HepG2 (cell line): ENCODE measurements at regions of chr13 and their contacts with region 1.

Region 1: DNA sequence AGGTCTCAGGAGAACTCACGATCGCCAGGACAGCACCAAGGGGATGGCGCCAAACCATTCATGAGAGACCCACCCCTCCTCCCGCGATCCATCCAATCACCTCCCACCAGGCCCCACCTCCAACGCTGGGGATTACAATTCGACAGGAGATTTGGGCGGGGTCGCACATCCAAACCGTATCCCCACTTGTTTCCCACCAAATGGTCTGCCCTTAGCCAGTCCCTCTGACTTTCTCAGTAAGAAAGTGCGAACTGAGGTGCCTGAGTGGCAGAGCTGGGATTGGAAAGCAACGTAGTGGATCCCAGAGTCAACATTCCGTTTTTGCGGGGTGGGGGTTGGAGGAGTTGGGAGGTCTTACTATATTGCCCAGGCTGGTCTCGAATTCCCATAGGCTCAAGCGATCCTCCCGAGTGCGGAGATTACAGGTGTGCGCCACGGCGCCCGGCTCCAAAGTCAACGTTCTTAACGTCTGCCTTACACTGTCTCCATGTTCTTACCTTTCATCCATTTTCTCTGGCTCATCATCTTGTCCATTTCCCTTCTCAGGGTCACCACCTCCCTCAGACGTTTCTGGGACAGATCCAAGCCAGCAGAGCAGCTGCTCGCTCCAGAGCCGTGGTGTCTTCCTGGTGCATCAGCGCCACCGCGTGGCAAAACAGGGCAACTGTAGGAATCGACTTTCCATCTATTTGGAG is 102.7 kb upstream of the ABCC4 start:
- DNase-seq: peak; percentile 51
- ATAC-seq: peak; percentile 94
- H3K4me3 ChIP-seq: peak overlapping the region in 1 of 3 experiments; percentile 39; a peak in 1 of 6 replicates
- H3K27ac ChIP-seq: no peak overlapping the region
- H3K4me1 ChIP-seq: peaks cover 13% of the 10 kb centered on the region
- H3K27me3 ChIP-seq: no peaks in the 10 kb centered on the region; a peak in 2 of 5 replicates
- CTCF ChIP-seq: peak; percentile 95
- EP300 ChIP-seq: no peak
- POLR2A ChIP-seq: no peak
- RAD21 ChIP-seq: peak; percentile 94

Region 2: DNA sequence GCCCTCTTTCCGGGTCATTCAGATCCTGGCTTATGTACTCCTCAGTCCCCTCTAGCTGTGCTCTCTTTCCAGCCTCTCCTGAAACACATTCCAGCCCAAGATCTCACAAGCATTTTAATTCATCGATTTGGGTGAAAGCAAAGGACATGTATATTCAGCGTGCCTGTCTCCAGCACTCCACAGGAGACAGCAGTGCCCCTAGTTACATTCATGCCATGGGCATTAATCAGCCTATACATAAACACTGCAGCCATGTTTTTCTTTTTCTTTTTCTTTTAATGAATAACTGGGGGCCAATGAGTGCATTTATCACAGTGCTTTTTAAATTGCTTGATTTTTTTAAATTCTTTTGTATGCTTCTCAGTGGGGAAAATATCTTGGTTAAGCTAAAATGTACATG is 1123.6 kb before region 1 on chr13:
- CTCF ChIA-PET with region 1: no interaction called
- POLR2A ChIA-PET with region 1: no interaction called
- in situ Hi-C with region 1: no loop called
- intact Hi-C with region 1: no loop called
- DNase-seq: no peak
- ATAC-seq: no peak; the same call in 2 of the 3 replicates
- H3K4me3 ChIP-seq: no peak overlapping the region
- H3K27ac ChIP-seq: no peak overlapping the region
- H3K4me1 ChIP-seq: no peaks in the 10 kb centered on the region
- H3K27me3 ChIP-seq: no peaks in the 10 kb centered on the region
- CTCF ChIP-seq: no peak
- EP300 ChIP-seq: no peak
- POLR2A ChIP-seq: no peak
- RAD21 ChIP-seq: no peak

Region 3: DNA sequence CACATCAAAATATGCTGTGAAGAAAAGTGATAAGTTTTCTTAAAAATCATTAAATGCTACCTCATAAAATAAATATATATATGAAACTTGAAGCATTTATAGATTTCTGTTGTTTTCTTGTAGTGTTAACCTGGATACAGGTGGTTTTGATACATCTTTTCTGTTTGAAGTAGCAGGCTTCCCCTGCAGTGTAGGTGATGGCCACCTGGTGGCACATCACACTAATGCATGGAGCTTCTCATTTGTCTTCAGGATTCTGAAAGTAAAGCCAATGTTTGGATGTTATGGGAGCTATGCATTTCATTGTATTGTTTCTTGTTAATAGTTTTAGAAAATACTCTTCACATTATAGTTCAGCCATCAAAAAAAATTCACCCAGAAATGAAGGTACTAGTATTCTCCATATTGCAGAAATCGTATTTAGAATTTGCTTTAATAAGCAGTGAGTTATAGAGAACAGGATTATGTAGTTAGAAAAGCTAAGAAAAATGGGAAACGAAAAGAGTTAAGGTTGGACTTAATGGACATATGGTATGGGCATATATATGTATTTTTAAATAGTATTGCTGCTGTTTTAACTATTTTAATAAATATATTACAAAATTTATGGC is 783.6 kb before region 1 on chr13:
- CTCF ChIA-PET with region 1: no interaction called
- POLR2A ChIA-PET with region 1: no interaction called
- in situ Hi-C with region 1: no loop called
- intact Hi-C with region 1: loop called (anchors 2 kb)
- DNase-seq: peak; percentile 39
- ATAC-seq: peak; percentile 90
- H3K4me3 ChIP-seq: no peak overlapping the region
- H3K27ac ChIP-seq: no peak overlapping the region
- H3K4me1 ChIP-seq: no peaks in the 10 kb centered on the region
- H3K27me3 ChIP-seq: peaks cover 0 to 4% of the 10 kb centered on the region in 2 experiments; a peak in 1 of 5 replicates
- CTCF ChIP-seq: peak; percentile 66
- EP300 ChIP-seq: no peak
- POLR2A ChIP-seq: no peak
- RAD21 ChIP-seq: peak; percentile 41; the same call in 1 of the 2 replicates

Region 4: DNA sequence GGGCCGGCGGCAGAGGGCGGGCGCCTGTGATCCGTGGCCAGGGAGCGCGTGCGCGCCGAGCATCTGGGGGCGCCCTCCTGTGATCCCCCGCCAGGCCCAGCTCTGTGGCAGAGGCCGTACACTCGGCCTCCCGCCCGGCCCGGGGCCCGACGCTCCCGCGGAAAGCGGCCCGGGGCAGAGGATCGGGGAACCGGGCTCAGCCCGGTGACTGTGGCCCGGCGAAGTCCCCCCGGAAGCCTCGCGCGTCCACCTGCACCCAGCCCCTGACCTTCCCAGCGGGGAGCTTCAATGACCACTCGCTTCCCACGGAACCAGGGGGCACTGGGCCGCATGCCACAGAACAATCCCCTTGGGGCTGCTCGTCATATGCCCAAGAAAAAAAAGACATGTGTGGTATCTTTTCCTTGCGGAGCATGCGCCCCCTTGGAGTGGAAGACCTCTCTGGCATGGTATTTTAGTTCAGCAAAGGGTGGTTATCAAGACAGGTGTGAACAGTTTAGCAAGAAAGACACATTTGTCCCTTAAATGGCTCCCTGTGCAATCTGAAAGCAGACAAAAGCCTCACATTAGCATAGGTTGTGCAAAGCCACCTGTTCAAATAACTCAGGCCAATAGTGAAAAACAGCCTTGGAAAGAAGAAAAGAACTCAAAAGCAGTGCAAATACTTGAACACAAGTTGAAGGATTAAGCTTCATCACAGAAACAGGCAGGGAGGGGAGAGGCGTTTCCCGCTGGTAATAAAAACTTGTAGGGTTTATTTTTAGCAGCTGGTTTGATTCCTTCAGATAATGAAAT is 400.8 kb before region 1 on chr13:
- CTCF ChIA-PET with region 1: no interaction called
- POLR2A ChIA-PET with region 1: no interaction called
- in situ Hi-C with region 1: loop called (anchors 25 kb)
- intact Hi-C with region 1: no loop called
- DNase-seq: no peak
- ATAC-seq: no peak; the same call in 1 of the 3 replicates
- H3K4me3 ChIP-seq: no peak overlapping the region
- H3K27ac ChIP-seq: no peak overlapping the region
- H3K4me1 ChIP-seq: peaks cover 19% of the 10 kb centered on the region
- H3K27me3 ChIP-seq: peaks cover 2 to 4% of the 10 kb centered on the region in 2 experiments; a peak in 1 of 5 replicates
- CTCF ChIP-seq: no peak
- EP300 ChIP-seq: no peak
- POLR2A ChIP-seq: no peak
- RAD21 ChIP-seq: no peak

Region 5: DNA sequence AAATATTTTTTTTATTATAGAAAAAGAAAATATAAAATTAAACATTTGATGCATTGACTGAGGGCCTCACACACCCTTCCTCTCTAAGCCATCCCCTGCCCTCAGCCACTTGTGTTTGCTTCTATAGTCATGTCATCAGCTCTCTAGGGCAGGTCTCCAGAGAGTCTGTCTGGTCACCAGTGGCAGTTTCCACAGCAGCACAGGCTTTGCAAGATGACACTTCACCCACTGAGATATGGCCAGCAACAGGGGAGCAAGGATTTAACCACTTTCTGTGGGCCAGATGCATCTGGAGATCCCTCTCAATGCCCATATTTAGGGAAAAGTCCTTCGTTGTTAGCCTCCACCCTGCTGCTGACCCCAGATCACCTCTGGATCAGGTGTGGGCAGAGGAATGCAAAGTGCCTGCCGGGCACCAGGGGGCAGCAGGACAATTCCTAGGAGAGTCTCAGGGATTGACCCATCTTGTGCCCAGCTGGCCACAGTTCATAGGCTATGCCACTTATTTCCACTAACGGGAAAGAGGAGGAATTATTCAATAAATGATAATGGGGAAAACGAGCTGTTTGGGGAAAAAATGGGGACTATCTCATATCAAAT is 107.5 kb before region 1 on chr13:
- CTCF ChIA-PET with region 1: interaction called, 14 read pairs
- POLR2A ChIA-PET with region 1: no interaction called
- in situ Hi-C with region 1: loop called (anchors 5 kb)
- intact Hi-C with region 1: loop called (anchors 2 kb)
- DNase-seq: peak; percentile 56
- ATAC-seq: peak; percentile 60
- H3K4me3 ChIP-seq: no peak overlapping the region
- H3K27ac ChIP-seq: no peak overlapping the region
- H3K4me1 ChIP-seq: peaks cover 38% of the 10 kb centered on the region
- H3K27me3 ChIP-seq: peaks cover 0 to 3% of the 10 kb centered on the region in 2 experiments; a peak in 1 of 5 replicates
- CTCF ChIP-seq: peak; percentile 84
- EP300 ChIP-seq: no peak
- POLR2A ChIP-seq: no peak
- RAD21 ChIP-seq: peak; percentile 72; the same call in 1 of the 2 replicates

Region 6: DNA sequence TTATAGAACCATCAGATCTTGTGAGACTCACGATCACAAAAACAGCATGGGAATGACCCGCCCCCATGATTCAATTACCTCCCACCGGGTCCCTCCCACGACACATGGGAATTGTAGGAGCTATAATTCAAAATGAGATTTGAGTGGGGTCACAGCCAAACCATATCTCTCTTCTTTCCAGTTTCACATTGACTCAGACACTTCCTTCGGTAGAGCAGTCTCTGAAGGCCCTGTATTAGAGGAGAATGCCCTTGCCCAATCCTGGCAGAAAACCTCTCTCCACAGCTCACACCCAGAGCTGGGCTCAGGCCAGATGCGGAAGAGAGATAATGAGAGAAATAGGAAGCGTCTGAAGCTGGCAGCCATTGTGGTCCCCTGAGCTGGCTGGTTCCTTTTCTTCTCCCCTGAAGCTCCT is 76.2 kb after region 1 on chr13:
- CTCF ChIA-PET with region 1: no interaction called
- POLR2A ChIA-PET with region 1: no interaction called
- in situ Hi-C with region 1: no loop called
- intact Hi-C with region 1: loop called (anchors 2 kb)
- DNase-seq: no peak
- ATAC-seq: no peak
- H3K4me3 ChIP-seq: no peak overlapping the region
- H3K27ac ChIP-seq: no peak overlapping the region
- H3K4me1 ChIP-seq: no peaks in the 10 kb centered on the region
- H3K27me3 ChIP-seq: peaks cover 2 to 11% of the 10 kb centered on the region in 2 experiments
- CTCF ChIP-seq: no peak
- EP300 ChIP-seq: no peak
- POLR2A ChIP-seq: no peak
- RAD21 ChIP-seq: no peak